Natural killer cell (primary cell): ENCODE measurements at regions of chr9 and their contacts with region 1.

Region 1: GRCh38 chr9:124126571-124127289 is 115.2 kb downstream of the LHX2 start:
- DNase-seq: peak; percentile 77 to 85
- ATAC-seq: peak; percentile 74 to 85 (median 84)
- H3K4me3 ChIP-seq: no peak overlapping the region
- H3K4me3 Mint-ChIP-seq: no peak overlapping the region
- H3K27ac ChIP-seq: no peak overlapping the region
- H3K27ac Mint-ChIP-seq: peak overlapping the region; percentile 11 to 63
- H3K4me1 ChIP-seq: peaks cover 8% of the 10 kb centered on the region
- H3K4me1 Mint-ChIP-seq: peaks cover 7 to 8% of the 10 kb centered on the region in 2 donors
- H3K27me3 ChIP-seq: no peaks in the 10 kb centered on the region
- H3K27me3 Mint-ChIP-seq: no peaks in the 10 kb centered on the region
- CTCF ChIP-seq: peak; percentile 96

Region 2: DNA sequence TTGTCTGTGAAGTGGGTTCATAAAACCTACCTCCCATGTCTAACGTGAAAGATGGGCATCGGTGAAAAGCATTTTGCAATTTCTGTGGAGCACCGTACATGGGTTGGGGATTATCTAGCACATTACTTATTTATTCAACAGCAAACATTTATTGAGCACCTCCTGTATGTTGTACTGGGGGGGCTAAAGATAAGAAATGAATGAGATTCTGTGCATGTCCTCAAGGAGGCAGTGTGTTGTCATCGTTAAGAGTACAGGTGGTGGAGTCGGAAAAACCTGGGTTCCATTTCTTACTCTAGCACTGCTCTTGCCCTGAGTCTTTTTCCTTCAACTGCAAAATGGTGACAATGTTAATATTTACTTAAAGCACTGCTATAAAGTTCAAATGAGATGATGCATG is 166.4 kb before region 1 on chr9:
- intact Hi-C with region 1: no loop called
- DNase-seq: no peak
- ATAC-seq: no peak
- H3K4me3 ChIP-seq: no peak overlapping the region
- H3K4me3 Mint-ChIP-seq: no peak overlapping the region
- H3K27ac ChIP-seq: no peak overlapping the region
- H3K27ac Mint-ChIP-seq: no peak overlapping the region
- H3K4me1 ChIP-seq: no peaks in the 10 kb centered on the region
- H3K4me1 Mint-ChIP-seq: peaks cover 0 to 4% of the 10 kb centered on the region in 2 donors
- H3K27me3 ChIP-seq: no peaks in the 10 kb centered on the region
- H3K27me3 Mint-ChIP-seq: peaks cover 11 to 25% of the 10 kb centered on the region in 2 donors
- CTCF ChIP-seq: no peak

Region 3: DNA sequence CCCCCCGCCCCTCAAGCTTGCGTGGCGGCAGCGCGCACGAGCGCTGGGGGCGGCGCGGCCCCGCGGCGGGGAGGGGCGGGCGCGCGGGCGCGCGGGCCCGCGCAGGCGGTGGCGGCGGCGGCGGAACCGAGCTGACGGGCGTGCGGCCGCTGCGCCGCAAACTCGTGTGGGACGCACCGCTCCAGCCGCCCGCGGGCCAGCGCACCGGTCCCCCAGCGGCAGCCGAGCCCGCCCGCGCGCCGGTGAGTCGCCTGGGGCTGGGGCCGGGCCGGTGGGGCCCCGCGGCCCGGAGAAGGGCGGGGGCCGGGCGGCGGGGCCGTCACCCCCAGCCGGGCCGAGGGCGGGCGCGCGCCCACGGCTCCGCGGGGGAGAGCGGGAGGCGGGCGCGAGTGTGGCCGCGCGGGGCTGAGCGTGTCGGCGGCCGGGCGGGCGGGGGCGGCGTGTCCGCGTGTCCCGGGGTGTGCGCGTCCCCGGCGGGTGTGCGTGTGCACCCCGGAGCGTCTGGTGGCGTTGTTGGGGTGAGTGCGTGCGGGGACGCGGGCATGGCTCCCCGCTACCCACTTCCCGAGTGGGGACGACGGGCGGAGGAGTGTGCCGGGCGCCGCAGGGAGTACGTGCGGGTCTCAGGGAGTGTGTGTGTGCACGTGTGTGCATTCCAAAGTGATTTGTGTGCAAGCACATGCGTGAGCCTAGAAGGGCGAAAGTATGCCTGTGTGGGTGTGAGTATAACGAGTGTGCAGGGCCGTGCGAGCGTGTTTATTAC is 131.3 kb after region 1 on chr9 and contains the start of gene NEK6:
- intact Hi-C with region 1: loop called (anchors 10 kb)
- DNase-seq: peak; percentile 56 to 62
- ATAC-seq: peak; percentile 79 to 82 (median 80)
- H3K4me3 ChIP-seq: peak within 1 kb of the TSS; percentile 94
- H3K4me3 Mint-ChIP-seq: peak within 1 kb of the TSS; percentile 98
- H3K27ac ChIP-seq: peak within 1 kb of the TSS; percentile 43
- H3K27ac Mint-ChIP-seq: peak within 1 kb of the TSS; percentile 81 to 94
- H3K4me1 ChIP-seq: peaks cover 53% of the 10 kb centered on the region
- H3K4me1 Mint-ChIP-seq: peaks cover 44 to 65% of the 10 kb centered on the region in 2 donors
- H3K27me3 ChIP-seq: no peaks in the 10 kb centered on the region
- H3K27me3 Mint-ChIP-seq: no peaks in the 10 kb centered on the region
- CTCF ChIP-seq: no peak
- total RNA-seq, gene NEK6: 25.0 to 34.9 (median 33.0) TPM

Region 4: GRCh38 chr9:124320062-124320973 is 193.6 kb after region 1 on chr9:
- intact Hi-C with region 1: loop called (anchors 2 kb)
- DNase-seq: peak; percentile 40 to 64
- ATAC-seq: peak; percentile 67 to 76 (median 71)
- H3K4me3 ChIP-seq: no peak overlapping the region
- H3K4me3 Mint-ChIP-seq: no peak overlapping the region
- H3K27ac ChIP-seq: no peak overlapping the region
- H3K27ac Mint-ChIP-seq: peak overlapping the region; percentile 18 to 66
- H3K4me1 ChIP-seq: peaks cover 9% of the 10 kb centered on the region
- H3K4me1 Mint-ChIP-seq: peaks cover 16 to 22% of the 10 kb centered on the region in 2 donors
- H3K27me3 ChIP-seq: no peaks in the 10 kb centered on the region
- H3K27me3 Mint-ChIP-seq: no peaks in the 10 kb centered on the region
- CTCF ChIP-seq: peak; percentile 76

Region 5: GRCh38 chr9:124386201-124386600 is 259.5 kb after region 1 on chr9:
- intact Hi-C with region 1: loop called (anchors 2 kb)
- DNase-seq: no peak
- ATAC-seq: no peak
- H3K4me3 ChIP-seq: no peak overlapping the region
- H3K4me3 Mint-ChIP-seq: no peak overlapping the region
- H3K27ac ChIP-seq: no peak overlapping the region
- H3K27ac Mint-ChIP-seq: no peak overlapping the region
- H3K4me1 ChIP-seq: no peaks in the 10 kb centered on the region
- H3K4me1 Mint-ChIP-seq: peaks cover 33 to 49% of the 10 kb centered on the region in 2 donors
- H3K27me3 ChIP-seq: no peaks in the 10 kb centered on the region
- H3K27me3 Mint-ChIP-seq: no peaks in the 10 kb centered on the region
- CTCF ChIP-seq: no peak

Region 6: DNA sequence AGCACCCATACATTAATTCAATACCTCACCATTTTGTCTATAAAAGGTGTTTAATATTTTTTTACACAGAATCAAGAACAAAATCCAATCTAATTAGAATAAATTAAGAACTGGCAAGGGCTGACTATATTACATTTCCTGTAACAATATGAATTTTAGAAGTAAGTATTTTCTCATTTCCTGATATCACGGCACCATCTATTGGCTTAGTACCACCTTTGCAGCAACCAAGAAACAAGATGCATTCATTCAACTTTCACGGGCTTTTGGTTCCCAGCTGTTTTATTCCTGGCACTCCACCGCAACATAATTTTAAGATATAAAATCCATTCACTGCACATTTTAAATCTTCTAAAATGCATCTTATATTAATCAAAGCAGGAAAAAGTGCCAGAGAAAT is 267.9 kb after region 1 on chr9:
- intact Hi-C with region 1: loop called (anchors 2 kb)
- DNase-seq: peak in 1 of 2 donors; percentile 20
- ATAC-seq: no peak
- H3K4me3 ChIP-seq: no peak overlapping the region
- H3K4me3 Mint-ChIP-seq: no peak overlapping the region
- H3K27ac ChIP-seq: no peak overlapping the region
- H3K27ac Mint-ChIP-seq: peak overlapping the region; percentile 14 to 77
- H3K4me1 ChIP-seq: no peaks in the 10 kb centered on the region
- H3K4me1 Mint-ChIP-seq: peaks cover 38 to 61% of the 10 kb centered on the region in 2 donors
- H3K27me3 ChIP-seq: no peaks in the 10 kb centered on the region
- H3K27me3 Mint-ChIP-seq: no peaks in the 10 kb centered on the region
- CTCF ChIP-seq: no peak

Region 7: DNA sequence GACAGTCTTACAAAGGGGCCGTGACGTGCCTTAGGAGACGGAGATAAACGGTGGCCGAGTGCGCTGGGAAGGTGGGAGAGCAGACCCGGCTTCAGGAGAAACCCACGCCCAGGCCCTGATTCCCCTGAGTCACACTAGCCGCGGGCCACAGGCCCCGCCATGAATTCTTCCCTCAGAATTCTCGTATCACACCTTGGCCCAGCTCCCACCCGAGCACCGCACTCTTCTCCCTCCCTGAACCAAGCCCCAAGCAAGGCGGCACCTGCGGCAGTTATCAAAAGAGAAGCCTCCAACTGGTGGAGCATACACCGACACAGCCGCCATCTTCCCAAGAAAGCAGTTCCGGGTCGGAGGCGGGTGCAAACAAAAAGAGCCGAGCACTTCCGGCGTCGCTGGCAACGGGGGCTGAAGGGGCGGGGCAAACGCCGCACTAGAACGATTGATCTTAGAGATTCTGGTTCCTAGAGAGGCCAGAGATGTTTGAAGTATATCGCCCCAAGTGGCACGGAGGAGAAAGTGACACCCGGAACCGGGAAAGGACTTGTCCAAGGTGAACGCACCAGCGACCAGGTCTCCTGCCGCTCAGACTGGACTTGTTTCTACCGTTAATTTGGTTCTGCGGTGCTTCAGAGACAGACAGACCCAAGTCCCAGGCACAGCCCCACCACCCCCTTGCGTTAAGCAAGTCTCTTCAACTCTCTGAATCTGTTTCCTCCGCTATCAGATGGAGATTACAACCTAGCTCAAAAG is 288.5 kb after region 1 on chr9 and contains the start of gene PSMB7:
- intact Hi-C with region 1: no loop called
- DNase-seq: peak; percentile 94 to 99
- ATAC-seq: peak; percentile 96 to 99 (median 96)
- H3K4me3 ChIP-seq: peak within 1 kb of the TSS; percentile 83
- H3K4me3 Mint-ChIP-seq: peak within 1 kb of the TSS; percentile 96
- H3K27ac ChIP-seq: peak within 1 kb of the TSS; percentile 64
- H3K27ac Mint-ChIP-seq: peak within 1 kb of the TSS; percentile 86 to 93
- H3K4me1 ChIP-seq: peaks cover 22% of the 10 kb centered on the region
- H3K4me1 Mint-ChIP-seq: peaks cover 25 to 27% of the 10 kb centered on the region in 2 donors
- H3K27me3 ChIP-seq: no peaks in the 10 kb centered on the region
- H3K27me3 Mint-ChIP-seq: no peaks in the 10 kb centered on the region
- CTCF ChIP-seq: peak; percentile 85
- total RNA-seq, gene PSMB7: 75.6 to 75.9 (median 75.8) TPM

Region 8: GRCh38 chr9:124537926-124538325 is 411.2 kb after region 1 on chr9:
- intact Hi-C with region 1: loop called (anchors 2 kb)
- DNase-seq: no peak
- ATAC-seq: no peak
- H3K4me3 ChIP-seq: no peak overlapping the region
- H3K4me3 Mint-ChIP-seq: no peak overlapping the region
- H3K27ac ChIP-seq: no peak overlapping the region
- H3K27ac Mint-ChIP-seq: no peak overlapping the region
- H3K4me1 ChIP-seq: no peaks in the 10 kb centered on the region
- H3K4me1 Mint-ChIP-seq: no peaks in the 10 kb centered on the region
- H3K27me3 ChIP-seq: no peaks in the 10 kb centered on the region
- H3K27me3 Mint-ChIP-seq: peaks cover 4 to 9% of the 10 kb centered on the region in 2 donors
- CTCF ChIP-seq: no peak